CD8-positive, alpha-beta memory T cell (primary cell): ENCODE measurements at regions of chr3 and their contacts with region 1.

Region 1: GRCh38 chr3:49007068-49007770 is at the start of gene WDR6:
- DNase-seq: peak; percentile 96 to 98 (median 97)
- H3K4me3 ChIP-seq: peak within 1 kb of the TSS; percentile 98
- H3K4me3 Mint-ChIP-seq: peak within 1 kb of the TSS; percentile 89 to 100 (median 98)
- H3K27ac ChIP-seq: peak within 1 kb of the TSS; percentile 88
- H3K27ac Mint-ChIP-seq: peak within 1 kb of the TSS; percentile 89 to 100 (median 99)
- H3K4me1 ChIP-seq: peaks cover 14% of the 10 kb centered on the region
- H3K4me1 Mint-ChIP-seq: peaks cover 22 to 38% (median 37%) of the 10 kb centered on the region in 3 donors
- H3K27me3 ChIP-seq: no peaks in the 10 kb centered on the region
- H3K27me3 Mint-ChIP-seq: peaks cover 0 to 3% of the 10 kb centered on the region in 2 donors
- total RNA-seq, gene WDR6: 158 to 167 TPM

Region 2: GRCh38 chr3:49021813-49022687 is 14.8 kb after region 1 on chr3 and contains the start of gene NDUFAF3:
- CTCF ChIA-PET with region 1: interaction called, 121 read pairs
- POLR2A ChIA-PET with region 1: interaction called, 79 read pairs
- DNase-seq: peak; percentile 88 to 93 (median 90)
- H3K4me3 ChIP-seq: peak within 1 kb of the TSS; percentile 95
- H3K4me3 Mint-ChIP-seq: peak within 1 kb of the TSS; percentile 91 to 97 (median 95)
- H3K27ac ChIP-seq: peak within 1 kb of the TSS; percentile 99
- H3K27ac Mint-ChIP-seq: peak within 1 kb of the TSS; percentile 95 to 99 (median 98)
- H3K4me1 ChIP-seq: peaks cover 38% of the 10 kb centered on the region
- H3K4me1 Mint-ChIP-seq: peaks cover 30 to 73% (median 36%) of the 10 kb centered on the region in 3 donors
- H3K27me3 ChIP-seq: no peaks in the 10 kb centered on the region
- H3K27me3 Mint-ChIP-seq: peaks cover 0 to 2% of the 10 kb centered on the region in 2 donors
- total RNA-seq, gene NDUFAF3: 86.3 to 88.8 TPM

Region 3: GRCh38 chr3:49028673-49029562 is 21.7 kb after region 1 on chr3 and contains the start of gene IMPDH2:
- CTCF ChIA-PET with region 1: interaction called, 121 read pairs
- POLR2A ChIA-PET with region 1: interaction called, 42 read pairs
- DNase-seq: peak; percentile 88 to 96 (median 92)
- H3K4me3 ChIP-seq: peak within 1 kb of the TSS; percentile 73
- H3K4me3 Mint-ChIP-seq: peak within 1 kb of the TSS; percentile 87 to 98 (median 93)
- H3K27ac ChIP-seq: peak within 1 kb of the TSS; percentile 88
- H3K27ac Mint-ChIP-seq: peak within 1 kb of the TSS; percentile 95 to 100 (median 98)
- H3K4me1 ChIP-seq: peaks cover 16% of the 10 kb centered on the region
- H3K4me1 Mint-ChIP-seq: peaks cover 24 to 49% (median 32%) of the 10 kb centered on the region in 3 donors
- H3K27me3 ChIP-seq: no peaks in the 10 kb centered on the region
- H3K27me3 Mint-ChIP-seq: peaks cover 0 to 2% of the 10 kb centered on the region in 2 donors
- total RNA-seq, gene IMPDH2: 448 to 457 TPM

Region 4: DNA sequence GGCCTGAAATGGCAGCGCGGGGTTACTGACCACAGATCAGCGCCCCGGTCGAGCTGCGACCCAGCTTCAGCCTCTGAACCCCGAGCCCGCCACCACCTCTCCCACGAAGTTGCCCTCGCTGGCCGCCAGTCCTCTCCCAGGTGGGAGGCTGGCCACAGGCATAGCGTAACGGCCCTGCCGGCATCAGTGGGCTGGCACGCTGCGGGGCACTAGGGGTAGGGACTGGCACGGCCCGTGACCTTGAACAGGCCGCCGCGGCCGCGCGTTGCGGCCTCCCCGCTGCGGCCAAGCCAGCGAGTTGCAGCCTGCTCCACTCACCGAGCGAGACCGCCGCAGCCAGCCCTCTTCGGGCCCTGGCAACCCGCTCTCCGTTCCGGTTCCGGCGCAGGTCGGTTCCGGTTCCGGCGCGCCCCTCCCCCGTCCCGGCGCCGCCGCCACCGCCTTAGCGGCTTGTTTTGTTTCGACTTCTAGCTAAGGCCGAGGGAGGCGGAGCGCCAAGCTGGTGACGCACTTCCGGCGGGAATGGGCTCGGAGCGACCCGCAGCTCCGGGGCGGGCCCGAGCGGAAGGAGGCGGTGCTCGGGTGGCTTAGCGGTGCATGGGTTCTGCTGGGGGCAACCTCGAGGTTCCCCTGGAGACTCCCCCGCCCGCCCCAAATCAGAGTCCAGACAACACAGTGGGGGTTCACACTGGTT is 113.4 kb after region 1 on chr3 and contains the start of gene USP19:
- CTCF ChIA-PET with region 1: no interaction called
- POLR2A ChIA-PET with region 1: interaction called, 11 read pairs
- DNase-seq: peak; percentile 91 to 96 (median 95)
- H3K4me3 ChIP-seq: peak within 1 kb of the TSS; percentile 85
- H3K4me3 Mint-ChIP-seq: peak within 1 kb of the TSS; percentile 85 to 91 (median 88)
- H3K27ac ChIP-seq: peak within 1 kb of the TSS; percentile 92
- H3K27ac Mint-ChIP-seq: peak within 1 kb of the TSS; percentile 88 to 97 (median 92)
- H3K4me1 ChIP-seq: peaks cover 21% of the 10 kb centered on the region
- H3K4me1 Mint-ChIP-seq: peaks cover 13 to 41% (median 17%) of the 10 kb centered on the region in 3 donors
- H3K27me3 ChIP-seq: no peaks in the 10 kb centered on the region
- H3K27me3 Mint-ChIP-seq: no peaks in the 10 kb centered on the region
- total RNA-seq, gene USP19: 71.8 to 73.9 TPM

Region 5: GRCh38 chr3:49566312-49566711 is 559.1 kb after region 1 on chr3:
- CTCF ChIA-PET with region 1: no interaction called
- POLR2A ChIA-PET with region 1: no interaction called
- DNase-seq: no peak
- H3K4me3 ChIP-seq: no peak overlapping the region
- H3K4me3 Mint-ChIP-seq: no peak overlapping the region
- H3K27ac ChIP-seq: no peak overlapping the region
- H3K27ac Mint-ChIP-seq: no peak overlapping the region
- H3K4me1 ChIP-seq: no peaks in the 10 kb centered on the region
- H3K4me1 Mint-ChIP-seq: no peaks in the 10 kb centered on the region
- H3K27me3 ChIP-seq: no peaks in the 10 kb centered on the region
- H3K27me3 Mint-ChIP-seq: peaks cover 0 to 18% of the 10 kb centered on the region in 2 donors